ENCODE measurements at regions of chr5 and their contacts with region 1.

Region 1: DNA sequence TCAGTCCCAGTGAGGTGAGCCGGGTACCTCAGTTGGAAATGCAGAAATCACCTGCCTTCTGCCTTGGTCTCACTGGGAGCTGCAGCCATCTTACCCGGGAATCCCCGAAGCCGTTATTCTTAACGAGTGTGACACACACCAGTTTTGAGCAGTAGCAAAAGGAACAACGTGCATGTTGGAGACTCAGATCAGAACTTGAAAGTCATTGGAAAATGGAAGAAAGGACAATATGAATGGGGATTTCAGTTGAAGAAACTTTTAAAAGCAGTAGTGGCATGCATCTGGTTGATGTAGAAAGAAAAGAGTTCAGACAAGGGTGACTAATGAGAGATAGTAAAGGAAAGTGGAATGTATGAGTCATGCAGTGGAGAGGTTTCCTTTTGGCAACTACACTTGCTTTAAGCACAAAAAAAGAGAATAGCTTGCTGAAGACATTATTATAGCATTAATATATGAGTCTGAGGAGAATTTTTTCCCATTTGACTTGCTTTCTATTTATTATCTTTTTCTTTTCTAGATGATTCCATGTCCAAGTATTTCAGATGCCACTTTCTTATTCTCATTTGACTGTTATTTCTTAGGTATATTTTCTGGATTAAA is 44.4 kb upstream of the ANKDD1B start:
- DNase-seq: peak; percentile 78
- H3K4me3 Mint-ChIP-seq: peak overlapping the region; percentile 57
- H3K27ac Mint-ChIP-seq: peak overlapping the region; percentile 96
- H3K4me1 Mint-ChIP-seq: peaks cover 69% of the 10 kb centered on the region
- H3K27me3 Mint-ChIP-seq: no peaks in the 10 kb centered on the region

Region 2: DNA sequence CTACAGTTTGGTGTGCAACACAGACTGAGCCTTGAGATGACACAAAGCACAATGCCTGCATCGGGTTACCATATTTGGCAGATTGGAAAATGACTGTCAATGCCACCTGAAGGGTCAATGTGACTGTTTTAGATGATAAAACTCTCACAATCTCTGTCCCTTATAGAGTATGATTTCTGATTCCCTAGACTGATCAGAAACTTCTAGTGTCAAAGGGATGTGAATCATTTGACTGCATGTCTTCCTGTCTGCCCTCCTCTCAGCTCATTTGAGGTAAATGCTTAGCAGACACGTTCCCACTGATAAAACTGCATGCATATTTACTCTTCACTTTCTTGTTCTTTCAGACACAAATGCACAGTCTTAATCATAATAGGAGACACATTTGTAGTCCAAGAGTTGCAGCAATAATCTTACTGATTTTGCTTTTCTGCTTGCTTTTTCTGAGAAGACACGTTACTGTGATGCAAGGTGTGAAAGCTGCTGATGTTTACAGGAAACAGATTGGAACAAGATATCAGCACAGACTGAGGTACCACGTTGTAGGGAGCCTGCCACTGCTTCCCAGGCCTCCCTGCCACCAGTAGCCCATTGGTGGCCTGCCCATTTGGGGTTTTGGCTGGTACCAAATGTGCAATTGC is 592.2 kb before region 1 on chr5:
- CTCF ChIA-PET with region 1: no interaction called
- POLR2A ChIA-PET with region 1: no interaction called
- intact Hi-C with region 1: loop called (anchors 5 kb)
- DNase-seq: peak; percentile 53
- H3K4me3 Mint-ChIP-seq: peak overlapping the region; percentile 7
- H3K27ac Mint-ChIP-seq: peak overlapping the region; percentile 82
- H3K4me1 Mint-ChIP-seq: peaks cover 27% of the 10 kb centered on the region
- H3K27me3 Mint-ChIP-seq: peaks cover 1% of the 10 kb centered on the region

Region 3: GRCh38 chr5:75336625-75337339 is 230.0 kb before region 1 on chr5 and contains the start of gene HMGCR:
- CTCF ChIA-PET with region 1: interaction called, 3 read pairs
- POLR2A ChIA-PET with region 1: interaction called, 8 read pairs
- intact Hi-C with region 1: loop called (anchors 1 kb)
- DNase-seq: peak; percentile 99
- H3K4me3 Mint-ChIP-seq: no peak within 1 kb of the TSS
- H3K27ac Mint-ChIP-seq: no peak within 1 kb of the TSS
- H3K4me1 Mint-ChIP-seq: peaks cover 35% of the 10 kb centered on the region
- H3K27me3 Mint-ChIP-seq: no peaks in the 10 kb centered on the region
- total RNA-seq, gene HMGCR: 57.7 to 68.6 TPM

Region 4: GRCh38 chr5:75389430-75389829 is 177.4 kb before region 1 on chr5:
- CTCF ChIA-PET with region 1: no interaction called
- POLR2A ChIA-PET with region 1: no interaction called
- intact Hi-C with region 1: loop called (anchors 2 kb)
- DNase-seq: peak; percentile 36
- H3K4me3 Mint-ChIP-seq: no peak overlapping the region
- H3K27ac Mint-ChIP-seq: peak overlapping the region; percentile 18
- H3K4me1 Mint-ChIP-seq: peaks cover 7% of the 10 kb centered on the region
- H3K27me3 Mint-ChIP-seq: no peaks in the 10 kb centered on the region

Region 5: GRCh38 chr5:75524071-75524470 is 42.7 kb before region 1 on chr5:
- CTCF ChIA-PET with region 1: no interaction called
- POLR2A ChIA-PET with region 1: no interaction called
- intact Hi-C with region 1: loop called (anchors 1 kb)
- DNase-seq: peak; percentile 37
- H3K4me3 Mint-ChIP-seq: no peak overlapping the region
- H3K27ac Mint-ChIP-seq: peak overlapping the region; percentile 57
- H3K4me1 Mint-ChIP-seq: peaks cover 63% of the 10 kb centered on the region
- H3K27me3 Mint-ChIP-seq: no peaks in the 10 kb centered on the region

Region 6: GRCh38 chr5:75717082-75717922 is 150.5 kb after region 1 on chr5 and contains the start of gene POC5:
- CTCF ChIA-PET with region 1: no interaction called
- POLR2A ChIA-PET with region 1: interaction called, 3 read pairs
- intact Hi-C with region 1: loop called (anchors 1 kb)
- DNase-seq: peak; percentile 99
- H3K4me3 Mint-ChIP-seq: peak within 1 kb of the TSS; percentile 98
- H3K27ac Mint-ChIP-seq: peak within 1 kb of the TSS; percentile 99
- H3K4me1 Mint-ChIP-seq: peaks cover 28% of the 10 kb centered on the region
- H3K27me3 Mint-ChIP-seq: no peaks in the 10 kb centered on the region
- total RNA-seq, gene POC5: 20.7 to 21.8 TPM

Region 7: DNA sequence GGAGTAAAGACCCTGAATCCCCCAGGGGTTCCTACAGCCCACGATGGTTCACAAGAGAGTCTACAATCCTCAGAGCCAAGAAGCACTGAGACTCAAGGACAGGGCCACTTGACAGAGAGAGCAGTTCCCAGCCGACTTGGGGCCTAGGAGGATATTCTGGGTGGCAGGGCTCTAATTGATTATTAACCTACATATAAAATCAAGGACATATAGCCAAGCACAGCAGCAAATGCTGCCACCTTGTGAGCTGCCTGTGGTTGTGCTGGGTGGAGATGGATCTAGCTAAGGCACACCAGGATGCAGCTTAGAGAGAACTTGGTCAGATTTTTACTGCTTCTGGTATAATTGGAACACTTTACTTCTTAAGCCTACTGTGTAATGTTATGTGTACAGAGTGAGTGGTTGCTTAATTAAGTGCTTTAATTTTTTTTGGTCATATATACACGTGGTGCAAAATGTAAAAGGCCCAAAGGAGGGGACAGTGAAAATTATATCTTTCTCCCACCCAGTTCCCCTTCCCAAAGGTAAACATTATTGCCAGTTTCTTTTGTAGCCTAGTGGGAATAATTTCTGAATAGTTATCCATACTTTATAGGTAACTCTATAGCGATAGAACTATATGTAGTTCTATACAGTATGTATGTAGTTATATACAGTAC is 977.6 kb after region 1 on chr5:
- CTCF ChIA-PET with region 1: no interaction called
- POLR2A ChIA-PET with region 1: no interaction called
- intact Hi-C with region 1: loop called (anchors 1 kb)
- DNase-seq: peak; percentile 79
- H3K4me3 Mint-ChIP-seq: peak overlapping the region; percentile 74
- H3K27ac Mint-ChIP-seq: peak overlapping the region; percentile 99
- H3K4me1 Mint-ChIP-seq: peaks cover 92% of the 10 kb centered on the region
- H3K27me3 Mint-ChIP-seq: no peaks in the 10 kb centered on the region